ENCODE measurements at regions of chrX and their contacts with region 1.

Region 1: GRCh38 chrX:64313624-64314023 is 81.6 kb downstream of the MTMR8 start:
- DNase-seq: no peak
- H3K4me3 ChIP-seq: no peak overlapping the region
- H3K27ac ChIP-seq: no peak overlapping the region
- H3K4me1 ChIP-seq: no peaks in the 10 kb centered on the region
- H3K27me3 ChIP-seq: no peaks in the 10 kb centered on the region
- CTCF ChIP-seq: no peak
- EP300 ChIP-seq: no peak
- POLR2A ChIP-seq: no peak

Region 2: GRCh38 chrX:64205735-64206491 is 107.7 kb before region 1 on chrX:
- in situ Hi-C with region 1: no loop called
- intact Hi-C with region 1: no loop called
- DNase-seq: peak; percentile 95
- H3K4me3 ChIP-seq: peak overlapping the region; percentile 41 to 78 (median 60)
- H3K27ac ChIP-seq: peak overlapping the region; percentile 87 to 96 (median 95)
- H3K4me1 ChIP-seq: peaks cover 4 to 26% (median 16%) of the 10 kb centered on the region in 4 donors
- H3K27me3 ChIP-seq: no peaks in the 10 kb centered on the region
- CTCF ChIP-seq: peak in 4 of 5 experiments; percentile 11 to 38 (median 26)
- EP300 ChIP-seq: no peak
- POLR2A ChIP-seq: peak; percentile 86

Region 3: DNA sequence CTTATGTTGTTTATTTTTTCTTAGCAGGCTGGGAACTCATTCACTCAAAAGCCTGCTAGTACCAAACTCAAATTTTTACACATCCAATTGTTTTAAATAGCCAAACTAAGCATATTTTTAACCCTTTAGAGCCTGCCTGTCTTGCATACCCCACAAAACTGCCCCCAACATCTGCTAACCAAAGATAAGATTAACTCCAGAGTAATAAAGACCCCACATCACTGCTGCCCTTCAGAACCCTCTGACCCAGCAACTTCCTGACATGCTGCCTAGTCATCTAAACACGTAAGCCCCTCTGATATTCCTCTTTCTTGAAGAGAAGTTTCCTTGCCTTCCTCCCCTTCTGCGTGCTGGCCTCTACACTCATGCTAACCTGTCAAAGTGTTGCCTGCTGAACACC is 22.5 kb before region 1 on chrX:
- in situ Hi-C with region 1: no loop called
- intact Hi-C with region 1: loop called (anchors 2 kb)
- DNase-seq: no peak
- H3K4me3 ChIP-seq: no peak overlapping the region
- H3K27ac ChIP-seq: no peak overlapping the region
- H3K4me1 ChIP-seq: no peaks in the 10 kb centered on the region
- H3K27me3 ChIP-seq: no peaks in the 10 kb centered on the region
- CTCF ChIP-seq: no peak
- EP300 ChIP-seq: no peak
- POLR2A ChIP-seq: no peak